Calu3 (cell line): ENCODE measurements at regions of chrX and their contacts with region 1.

Region 1: DNA sequence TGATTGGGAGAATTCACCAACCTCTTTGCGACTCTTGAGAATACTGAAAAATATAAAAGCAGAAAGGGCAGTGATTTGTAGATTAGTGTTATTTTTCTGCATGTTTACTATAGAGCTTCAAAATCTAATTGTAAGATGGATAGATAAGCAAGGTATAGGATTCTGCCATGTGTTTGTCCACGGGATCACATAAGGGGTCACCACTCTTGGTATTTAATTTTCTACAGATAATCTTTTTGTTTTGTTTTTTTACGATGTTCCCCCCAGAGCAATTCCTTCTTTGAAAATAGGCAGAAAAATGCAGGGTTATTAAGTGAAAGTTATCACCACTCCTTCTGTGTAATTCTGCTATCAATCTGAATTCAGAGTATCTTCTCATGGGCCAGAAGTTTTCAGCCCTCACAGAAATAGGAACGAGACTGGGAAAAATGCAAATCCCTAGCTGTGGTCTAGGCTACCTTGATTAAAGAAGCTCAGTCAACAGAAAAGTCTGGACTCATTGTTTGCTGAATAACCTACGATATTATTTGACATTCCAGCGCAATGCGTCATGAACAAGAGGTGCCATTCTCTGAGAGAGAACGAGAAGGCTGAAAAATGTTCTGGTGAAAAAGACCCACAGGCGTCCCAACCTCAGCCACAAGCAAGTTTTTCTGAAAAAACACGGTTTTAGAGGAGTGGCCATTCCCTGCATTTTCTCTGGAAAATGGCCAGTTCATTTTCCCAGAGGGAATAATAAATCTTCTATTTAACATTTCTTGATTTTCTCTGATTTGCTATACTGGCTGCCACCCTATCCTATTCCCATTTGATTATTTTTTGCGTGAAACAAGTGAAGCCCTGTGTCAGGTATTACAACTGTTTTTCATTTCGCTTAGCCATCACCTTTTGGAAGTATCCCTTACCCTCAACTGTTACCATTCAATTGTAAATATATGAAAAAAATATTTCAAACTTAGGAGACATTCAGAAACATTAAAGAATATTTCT is 1117.4 kb upstream of the PRKX start:
- DNase-seq: peak; percentile 53
- H3K4me3 Mint-ChIP-seq: peak overlapping the region; percentile 14
- H3K27ac Mint-ChIP-seq: peak overlapping the region; percentile 70
- H3K4me1 Mint-ChIP-seq: peaks cover 19% of the 10 kb centered on the region
- H3K27me3 Mint-ChIP-seq: no peaks in the 10 kb centered on the region
- CTCF ChIP-seq: no peak

Region 2: GRCh38 chrX:4710618-4711433 is 120.0 kb before region 1 on chrX:
- CTCF ChIA-PET with region 1: no interaction called
- intact Hi-C with region 1: loop called (anchors 5 kb)
- DNase-seq: peak; percentile 51
- H3K4me3 Mint-ChIP-seq: peak overlapping the region; percentile 17
- H3K27ac Mint-ChIP-seq: peak overlapping the region; percentile 77
- H3K4me1 Mint-ChIP-seq: peaks cover 27% of the 10 kb centered on the region
- H3K27me3 Mint-ChIP-seq: no peaks in the 10 kb centered on the region
- CTCF ChIP-seq: no peak

Region 3: GRCh38 chrX:4787987-4788386 is 42.9 kb before region 1 on chrX:
- CTCF ChIA-PET with region 1: no interaction called
- intact Hi-C with region 1: no loop called
- DNase-seq: no peak
- H3K4me3 Mint-ChIP-seq: no peak overlapping the region
- H3K27ac Mint-ChIP-seq: no peak overlapping the region
- H3K4me1 Mint-ChIP-seq: no peaks in the 10 kb centered on the region
- H3K27me3 Mint-ChIP-seq: no peaks in the 10 kb centered on the region
- CTCF ChIP-seq: no peak